ENCODE measurements at regions of chr1 and their contacts with region 1.

Region 1: DNA sequence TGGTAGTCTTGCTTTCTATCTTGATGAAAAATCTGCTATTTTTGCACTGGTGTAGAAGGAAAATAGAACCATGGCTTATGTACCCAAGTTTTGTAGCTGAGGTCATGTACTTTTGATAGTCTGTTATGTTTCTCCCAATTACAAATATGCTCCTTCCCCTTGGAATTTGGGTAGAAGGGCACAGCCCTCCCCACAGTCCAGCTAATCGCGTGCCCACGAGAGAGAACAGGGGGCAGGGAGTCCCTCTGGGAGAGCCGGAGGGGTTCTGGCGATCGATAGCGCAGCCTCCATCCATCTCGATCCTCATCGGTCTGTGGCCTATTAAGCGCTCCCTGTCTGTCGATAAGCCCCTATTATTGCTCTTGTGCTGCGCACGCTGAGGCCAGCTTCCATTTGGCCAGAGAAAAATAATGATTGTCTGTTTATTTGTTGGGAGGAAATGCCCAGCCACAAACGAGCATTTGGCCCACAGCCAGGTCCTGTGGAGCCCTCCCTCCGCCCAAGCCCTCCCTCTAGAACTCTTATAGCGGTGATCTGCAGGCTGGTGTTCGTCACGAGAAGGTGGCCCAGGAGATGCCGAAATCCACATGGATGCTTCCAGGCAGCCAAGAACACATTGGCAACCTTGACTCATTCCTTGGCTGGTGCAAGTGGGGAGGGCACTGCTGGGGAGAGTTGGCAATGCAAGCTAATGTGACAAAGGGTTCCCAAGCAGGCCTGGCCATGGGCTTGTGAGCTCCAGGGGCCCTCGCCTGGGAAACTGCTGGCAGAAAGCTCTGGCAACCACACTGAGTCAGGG is 134.7 kb upstream of the TNR start:
- DNase-seq: peak; percentile 83 to 88
- ATAC-seq: peak; percentile 84
- H3K4me3 ChIP-seq: no peak overlapping the region
- H3K27ac ChIP-seq: peak overlapping the region; percentile 37 to 95
- H3K4me1 ChIP-seq: peaks cover 0 to 3% of the 10 kb centered on the region in 2 donors
- H3K27me3 ChIP-seq: no peaks in the 10 kb centered on the region

Region 2: DNA sequence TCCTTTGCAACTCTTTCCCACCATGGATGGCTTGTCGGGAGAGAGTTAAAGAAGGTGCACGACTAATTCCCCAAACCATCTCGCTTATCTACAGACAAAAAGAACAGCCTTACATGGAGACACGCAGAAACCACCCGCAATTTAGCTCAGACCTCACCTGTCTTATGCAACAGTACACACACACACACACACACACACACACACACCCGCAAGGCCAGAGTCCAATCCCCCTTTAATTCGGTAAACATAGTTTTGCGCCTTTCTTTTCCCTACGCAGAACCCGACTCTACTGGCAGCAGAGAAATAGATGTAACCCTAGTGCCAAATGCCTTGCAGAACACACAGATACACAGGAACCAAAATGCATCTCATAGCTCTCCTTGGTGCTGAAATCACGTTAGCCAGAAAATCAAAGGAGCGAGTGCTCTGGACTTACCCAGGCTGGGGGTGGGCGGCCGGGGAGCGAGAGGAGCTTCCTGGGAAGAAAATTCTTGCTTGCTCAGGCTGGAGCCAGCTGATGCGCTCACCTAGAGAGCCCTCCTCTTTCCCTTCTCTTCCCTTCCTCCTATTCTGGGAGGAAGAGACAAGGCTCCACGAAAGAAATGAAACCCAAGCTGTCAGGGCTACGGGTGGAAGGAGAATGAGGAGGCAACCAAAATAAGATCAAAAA is 135.2 kb before region 1 on chr1:
- intact Hi-C with region 1: loop called in 1 of 2 experiments (anchors 5 kb)
- DNase-seq: no peak
- ATAC-seq: no peak
- H3K4me3 ChIP-seq: no peak overlapping the region
- H3K27ac ChIP-seq: no peak overlapping the region
- H3K4me1 ChIP-seq: no peaks in the 10 kb centered on the region
- H3K27me3 ChIP-seq: peaks cover 0 to 2% of the 10 kb centered on the region in 2 donors

Region 3: DNA sequence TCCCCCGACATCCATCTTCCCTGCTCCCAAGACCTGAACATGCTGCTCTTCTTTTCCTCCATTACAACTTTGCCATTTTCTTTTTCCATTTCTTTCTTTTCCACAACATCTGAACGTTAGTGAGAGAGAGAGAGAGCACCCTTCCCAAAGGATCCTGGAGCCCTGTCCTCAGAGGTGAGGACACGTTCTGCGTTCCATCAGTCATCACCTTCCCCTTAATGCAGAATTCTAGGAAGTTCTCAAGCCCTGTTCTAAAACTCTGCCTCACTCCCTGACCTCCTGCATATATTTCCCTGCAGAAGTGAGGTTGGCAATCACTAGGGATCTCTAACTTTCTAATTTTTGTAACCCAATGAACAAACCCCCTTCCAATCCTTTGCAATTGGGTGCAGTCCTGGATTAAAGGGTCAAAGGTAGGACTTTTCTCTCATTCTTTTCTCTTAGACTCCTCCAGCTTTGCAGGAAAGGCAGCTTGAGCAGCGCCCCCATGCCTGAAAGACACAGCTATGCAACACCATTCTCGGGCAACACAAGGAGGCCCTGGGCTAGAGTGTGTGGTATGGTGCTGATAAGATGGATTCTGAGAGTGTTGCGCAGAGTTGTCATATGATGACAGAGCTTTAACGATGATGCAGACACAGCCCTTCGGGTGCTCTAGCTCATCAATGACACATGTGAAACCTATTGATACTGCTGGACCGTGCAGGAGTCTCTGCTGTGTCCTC is 75.6 kb before region 1 on chr1:
- intact Hi-C with region 1: no loop called
- DNase-seq: no peak
- ATAC-seq: no peak
- H3K4me3 ChIP-seq: no peak overlapping the region
- H3K27ac ChIP-seq: no peak overlapping the region
- H3K4me1 ChIP-seq: no peaks in the 10 kb centered on the region
- H3K27me3 ChIP-seq: no peaks in the 10 kb centered on the region

Region 4: GRCh38 chr1:175824079-175824478 is 54.1 kb before region 1 on chr1:
- intact Hi-C with region 1: loop called (anchors 5 kb)
- DNase-seq: peak in 1 of 2 donors; percentile 50
- ATAC-seq: no peak
- H3K4me3 ChIP-seq: no peak overlapping the region
- H3K27ac ChIP-seq: no peak overlapping the region
- H3K4me1 ChIP-seq: peaks cover 2 to 9% of the 10 kb centered on the region in 2 donors
- H3K27me3 ChIP-seq: no peaks in the 10 kb centered on the region

Region 5: GRCh38 chr1:176022574-176022973 is 144.4 kb after region 1 on chr1:
- intact Hi-C with region 1: no loop called
- DNase-seq: no peak
- ATAC-seq: no peak
- H3K4me3 ChIP-seq: no peak overlapping the region
- H3K27ac ChIP-seq: no peak overlapping the region
- H3K4me1 ChIP-seq: peaks cover 0 to 4% of the 10 kb centered on the region in 2 donors
- H3K27me3 ChIP-seq: no peaks in the 10 kb centered on the region

Measured in aorta (tissue), 5 donors.